ENCODE measurements at regions of chr19 and their contacts with region 1.

Region 1: GRCh38 chr19:36573020-36573885 is at the start of gene ZNF529:
- DNase-seq: peak; percentile 67 to 95 (median 85)
- ATAC-seq: peak; percentile 95
- H3K4me3 ChIP-seq: peak within 1 kb of the TSS; percentile 95
- H3K4me3 Mint-ChIP-seq: peak within 1 kb of the TSS; percentile 80 to 100 (median 93)
- H3K27ac ChIP-seq: peak within 1 kb of the TSS; percentile 98
- H3K27ac Mint-ChIP-seq: peak within 1 kb of the TSS; percentile 94 to 100 (median 98)
- H3K4me1 ChIP-seq: peaks cover 0 to 15% of the 10 kb centered on the region in 2 donors
- H3K4me1 Mint-ChIP-seq: peaks cover 23 to 46% (median 40%) of the 10 kb centered on the region in 7 donors
- H3K27me3 ChIP-seq: no peaks in the 10 kb centered on the region
- H3K27me3 Mint-ChIP-seq: no peaks in the 10 kb centered on the region
- total RNA-seq, gene ZNF529: 22.6 to 37.8 (median 33.8) TPM

Region 2: DNA sequence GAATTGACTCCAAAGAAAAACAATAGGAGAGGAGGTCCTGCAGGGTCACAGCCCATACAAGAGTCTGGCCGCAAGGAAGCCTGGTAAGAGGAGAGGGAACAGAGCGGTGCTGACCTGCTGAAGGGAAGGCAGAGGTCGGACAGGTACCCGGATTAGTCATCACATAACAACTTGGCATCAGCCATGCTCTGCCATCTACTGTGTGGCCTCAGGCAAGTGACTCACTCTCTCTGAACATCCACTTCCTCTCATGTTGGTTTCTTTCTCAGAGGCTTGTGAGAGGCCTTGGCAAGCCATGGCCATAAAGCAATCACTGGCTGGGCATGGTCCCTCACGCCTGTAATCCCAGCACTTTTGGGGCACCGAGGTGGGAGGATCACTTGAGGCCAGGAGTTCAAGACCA is 440.8 kb before region 1 on chr19:
- CTCF ChIA-PET with region 1: no interaction called
- POLR2A ChIA-PET with region 1: no interaction called
- intact Hi-C with region 1: loop called in 1 of 2 experiments (anchors 5 kb)
- DNase-seq: no peak
- ATAC-seq: peak; percentile 50
- H3K4me3 ChIP-seq: no peak overlapping the region
- H3K4me3 Mint-ChIP-seq: peak overlapping the region in 2 of 10 donors; percentile 12 to 29
- H3K27ac ChIP-seq: no peak overlapping the region
- H3K27ac Mint-ChIP-seq: peak overlapping the region in 1 of 9 donors; percentile 80
- H3K4me1 ChIP-seq: no peaks in the 10 kb centered on the region
- H3K4me1 Mint-ChIP-seq: peaks cover 0 to 34% (median 5%) of the 10 kb centered on the region in 7 donors
- H3K27me3 ChIP-seq: no peaks in the 10 kb centered on the region
- H3K27me3 Mint-ChIP-seq: no peaks in the 10 kb centered on the region

Region 3: DNA sequence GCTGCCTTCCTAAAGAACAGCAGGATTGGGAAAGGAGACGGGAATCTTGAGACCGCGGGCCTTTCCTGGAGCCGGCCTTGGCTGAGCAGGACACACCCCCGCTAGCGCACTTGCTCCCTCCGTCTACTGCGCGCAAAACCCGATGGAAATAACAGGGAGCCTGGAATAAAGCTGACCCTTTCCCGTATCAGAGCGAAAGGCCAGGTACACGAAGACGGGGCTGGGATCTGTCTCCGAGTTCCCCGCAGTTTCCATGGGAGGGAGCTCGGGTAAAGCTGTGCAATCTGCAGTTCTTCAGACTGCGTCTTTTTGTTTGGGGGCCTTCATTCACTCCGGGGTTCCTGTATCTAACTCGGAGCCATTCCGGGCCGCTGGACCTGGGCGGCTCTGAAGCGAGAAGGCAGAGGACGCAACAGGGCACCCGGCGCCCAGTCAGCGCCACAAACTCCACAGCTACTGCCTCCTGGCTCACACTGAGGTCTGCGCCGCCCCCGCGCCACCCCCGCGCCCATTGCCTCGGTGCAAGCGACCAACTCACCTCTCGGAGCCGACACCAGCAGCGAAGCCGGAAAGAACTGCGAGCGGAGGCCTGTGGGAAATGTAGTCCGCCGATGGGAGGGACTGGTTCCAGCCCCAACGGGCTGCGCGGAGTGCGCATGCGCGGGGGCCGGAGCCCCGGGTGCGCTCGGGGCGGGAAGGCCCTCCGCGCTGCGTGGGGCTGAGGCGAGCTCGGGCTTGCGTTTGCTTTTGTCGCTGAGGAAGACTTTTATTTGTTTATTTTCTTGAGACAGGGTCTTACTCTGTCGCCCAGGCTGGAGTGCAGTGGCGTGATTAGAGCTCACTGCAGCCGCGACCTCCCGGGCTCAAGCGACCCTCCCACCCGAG is 194.4 kb before region 1 on chr19 and contains the start of gene ZFP14:
- CTCF ChIA-PET with region 1: no interaction called
- POLR2A ChIA-PET with region 1: interaction called, 7 read pairs
- intact Hi-C with region 1: loop called (anchors 1 kb)
- DNase-seq: peak; percentile 86 to 95 (median 93)
- ATAC-seq: peak; percentile 99
- H3K4me3 ChIP-seq: peak within 1 kb of the TSS; percentile 86
- H3K4me3 Mint-ChIP-seq: peak within 1 kb of the TSS; percentile 82 to 98 (median 94)
- H3K27ac ChIP-seq: peak within 1 kb of the TSS; percentile 86
- H3K27ac Mint-ChIP-seq: peak within 1 kb of the TSS; percentile 55 to 98 (median 94)
- H3K4me1 ChIP-seq: peaks cover 0 to 10% of the 10 kb centered on the region in 2 donors
- H3K4me1 Mint-ChIP-seq: peaks cover 9 to 23% (median 21%) of the 10 kb centered on the region in 7 donors
- H3K27me3 ChIP-seq: no peaks in the 10 kb centered on the region
- H3K27me3 Mint-ChIP-seq: no peaks in the 10 kb centered on the region
- total RNA-seq, gene ZFP14: 5.3 to 24.0 (median 9.2) TPM

Region 4: DNA sequence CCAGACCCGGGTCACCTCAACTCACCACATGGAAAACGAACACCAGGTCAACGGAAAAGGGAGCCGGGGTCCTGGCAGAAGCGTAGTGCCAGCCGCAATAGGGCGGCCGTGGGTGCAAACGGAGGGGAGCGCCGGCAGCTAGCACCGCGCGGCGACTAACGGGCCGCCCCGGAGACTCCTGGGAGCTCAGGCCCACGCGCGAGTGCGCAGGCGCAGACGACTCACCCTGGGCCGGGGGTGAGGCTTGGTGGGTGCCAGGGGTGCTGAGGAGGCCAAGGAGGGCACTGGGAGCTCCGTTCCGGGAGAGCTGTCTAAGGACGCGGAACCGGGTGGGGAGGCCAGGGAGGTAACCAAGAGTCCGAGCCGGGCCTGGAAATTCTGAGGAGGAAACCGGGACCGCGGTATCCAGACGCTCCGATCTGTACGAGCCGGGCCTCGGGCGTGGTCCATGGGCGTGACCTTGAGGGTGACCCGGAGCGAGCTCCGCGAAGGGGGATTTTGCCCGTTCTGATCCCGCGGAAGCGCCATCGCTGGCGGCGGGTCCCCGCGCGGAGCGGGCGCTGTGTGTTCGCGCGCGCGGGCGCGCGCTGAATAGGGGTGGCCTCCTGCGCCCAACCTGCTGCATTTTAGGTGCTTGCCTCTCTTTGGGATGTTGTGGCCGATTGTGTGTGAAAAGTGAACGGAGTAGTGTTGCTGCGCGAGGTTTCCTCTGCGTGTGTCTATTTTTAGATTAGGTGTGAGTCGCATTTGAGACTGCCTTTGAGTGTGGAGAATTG is 32.0 kb after region 1 on chr19 and contains the start of gene ZNF382:
- CTCF ChIA-PET with region 1: no interaction called
- POLR2A ChIA-PET with region 1: interaction called, 18 read pairs
- intact Hi-C with region 1: loop called (anchors 1 kb)
- DNase-seq: peak; percentile 77 to 92 (median 86)
- ATAC-seq: peak; percentile 80
- H3K4me3 ChIP-seq: peak within 1 kb of the TSS; percentile 95
- H3K4me3 Mint-ChIP-seq: peak within 1 kb of the TSS; percentile 81 to 99 (median 93)
- H3K27ac ChIP-seq: peak within 1 kb of the TSS; percentile 84
- H3K27ac Mint-ChIP-seq: peak within 1 kb of the TSS; percentile 78 to 98 (median 93)
- H3K4me1 ChIP-seq: peaks cover 7 to 15% of the 10 kb centered on the region in 2 donors
- H3K4me1 Mint-ChIP-seq: peaks cover 20 to 32% (median 27%) of the 10 kb centered on the region in 7 donors
- H3K27me3 ChIP-seq: no peaks in the 10 kb centered on the region
- H3K27me3 Mint-ChIP-seq: no peaks in the 10 kb centered on the region
- total RNA-seq, gene ZNF382: 5.4 to 20.2 (median 12.2) TPM

Region 5: DNA sequence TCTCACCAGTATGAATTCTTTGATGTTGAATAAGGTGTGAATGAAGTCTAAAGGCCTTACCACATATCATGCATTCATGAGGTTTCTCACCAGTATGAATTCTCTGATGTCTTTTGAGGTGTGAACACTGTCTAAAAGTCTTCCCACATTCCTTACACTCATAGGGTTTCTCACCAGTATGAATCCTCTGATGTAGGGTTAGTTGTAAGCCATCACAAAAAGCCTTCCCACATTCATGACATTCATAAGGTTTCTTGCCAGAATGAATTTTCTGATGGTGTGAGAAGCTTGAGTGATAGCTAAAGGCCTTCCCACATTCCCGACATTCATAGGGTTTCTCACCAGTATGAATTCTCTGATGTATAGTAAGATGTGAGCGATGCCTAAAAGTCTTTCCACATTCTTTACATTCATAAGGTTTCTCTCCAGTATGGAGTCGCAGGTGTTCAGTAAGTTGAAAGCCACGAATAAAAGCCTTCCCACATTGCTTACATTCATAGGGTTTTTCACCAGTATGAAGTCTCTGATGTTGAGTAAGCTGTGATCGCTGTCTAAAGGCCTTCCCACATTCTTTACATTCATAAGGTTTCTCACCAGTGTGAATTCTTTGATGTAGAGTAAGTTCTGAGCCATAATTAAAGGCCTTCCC is 65.7 kb after region 1 on chr19:
- CTCF ChIA-PET with region 1: no interaction called
- POLR2A ChIA-PET with region 1: no interaction called
- intact Hi-C with region 1: no loop called
- DNase-seq: no peak
- ATAC-seq: no peak
- H3K4me3 ChIP-seq: no peak overlapping the region
- H3K4me3 Mint-ChIP-seq: no peak overlapping the region
- H3K27ac ChIP-seq: no peak overlapping the region
- H3K27ac Mint-ChIP-seq: no peak overlapping the region
- H3K4me1 ChIP-seq: no peaks in the 10 kb centered on the region
- H3K4me1 Mint-ChIP-seq: no peaks in the 10 kb centered on the region
- H3K27me3 ChIP-seq: no peaks in the 10 kb centered on the region
- H3K27me3 Mint-ChIP-seq: no peaks in the 10 kb centered on the region

Region 6: GRCh38 chr19:36665832-36666231 is 92.6 kb after region 1 on chr19:
- CTCF ChIA-PET with region 1: no interaction called
- POLR2A ChIA-PET with region 1: no interaction called
- intact Hi-C with region 1: loop called in 1 of 2 experiments (anchors 2 kb)
- DNase-seq: peak in 1 of 9 donors; percentile 2
- ATAC-seq: no peak
- H3K4me3 ChIP-seq: peak overlapping the region; percentile 88
- H3K4me3 Mint-ChIP-seq: peak overlapping the region; percentile 91 to 100 (median 98)
- H3K27ac ChIP-seq: no peak overlapping the region
- H3K27ac Mint-ChIP-seq: peak overlapping the region; percentile 29 to 99 (median 93)
- H3K4me1 ChIP-seq: peaks cover 0 to 10% of the 10 kb centered on the region in 2 donors
- H3K4me1 Mint-ChIP-seq: peaks cover 17 to 42% (median 35%) of the 10 kb centered on the region in 7 donors
- H3K27me3 ChIP-seq: no peaks in the 10 kb centered on the region
- H3K27me3 Mint-ChIP-seq: no peaks in the 10 kb centered on the region

Region 7: DNA sequence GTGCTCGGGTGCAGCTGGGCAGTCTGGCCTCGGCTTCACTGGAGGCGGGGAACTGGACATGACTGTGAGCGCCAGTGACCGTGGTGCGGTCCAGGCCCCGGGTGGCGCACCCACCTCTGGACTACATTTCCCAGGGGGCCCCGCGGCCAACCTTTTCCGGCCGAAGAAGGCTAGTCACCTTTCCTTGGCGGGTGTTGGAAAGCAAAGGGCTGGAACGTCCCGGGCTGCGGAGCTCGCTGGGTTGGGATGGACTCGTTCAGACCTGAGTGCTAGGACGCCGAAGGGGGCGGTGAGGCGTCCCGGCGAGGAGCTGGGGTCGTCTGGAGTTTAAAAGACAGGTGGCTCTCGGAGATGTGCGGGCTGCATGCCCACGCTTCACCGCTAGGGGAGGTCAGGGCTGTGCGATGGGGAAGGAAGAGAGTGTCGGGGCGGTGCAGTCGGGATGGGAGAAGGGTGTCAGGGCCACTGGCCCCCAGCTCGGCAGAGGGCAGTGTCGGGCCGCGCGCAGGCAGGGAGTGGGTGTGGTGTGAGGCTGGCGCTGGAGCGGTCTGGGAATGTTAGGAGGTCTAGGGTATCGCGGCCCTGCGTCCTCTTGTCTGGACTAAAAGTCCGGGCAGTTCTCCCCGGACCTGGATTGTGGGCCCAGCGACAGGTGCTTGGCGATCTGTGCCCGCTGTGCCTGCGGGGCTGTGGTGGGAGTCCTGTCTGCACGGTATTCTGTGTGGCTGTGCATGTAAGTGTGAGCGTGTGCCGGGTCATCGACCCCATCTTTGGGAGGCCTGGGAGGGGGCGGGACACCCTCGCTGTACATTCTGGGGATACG is 400.0 kb after region 1 on chr19:
- CTCF ChIA-PET with region 1: no interaction called
- POLR2A ChIA-PET with region 1: no interaction called
- intact Hi-C with region 1: loop called in 1 of 2 experiments (anchors 2 kb)
- DNase-seq: peak; percentile 56 to 84 (median 73)
- ATAC-seq: peak; percentile 96
- H3K4me3 ChIP-seq: peak overlapping the region; percentile 100
- H3K4me3 Mint-ChIP-seq: peak overlapping the region; percentile 92 to 99 (median 97)
- H3K27ac ChIP-seq: peak overlapping the region; percentile 75
- H3K27ac Mint-ChIP-seq: peak overlapping the region; percentile 83 to 97 (median 92)
- H3K4me1 ChIP-seq: peaks cover 5 to 15% of the 10 kb centered on the region in 2 donors
- H3K4me1 Mint-ChIP-seq: peaks cover 9 to 22% (median 13%) of the 10 kb centered on the region in 7 donors
- H3K27me3 ChIP-seq: no peaks in the 10 kb centered on the region
- H3K27me3 Mint-ChIP-seq: no peaks in the 10 kb centered on the region

Measured in naive thymus-derived CD4-positive, alpha-beta T cell (primary cell).